ENCODE measurements at regions of chr2 and their contacts with region 1.

Region 1: GRCh38 chr2:17830053-17831034 is 14.1 kb downstream of the MSGN1 start:
- DNase-seq: no peak
- H3K4me3 ChIP-seq: peak overlapping the region; percentile 14 to 34 (median 22)
- H3K27ac ChIP-seq: no peak overlapping the region
- H3K4me1 ChIP-seq: peaks cover 7 to 12% (median 8%) of the 10 kb centered on the region in 4 donors
- H3K27me3 ChIP-seq: peaks cover 0 to 18% (median 3%) of the 10 kb centered on the region in 4 donors
- CTCF ChIP-seq: peak; percentile 37 to 83 (median 58)
- EP300 ChIP-seq: no peak
- POLR2A ChIP-seq: no peak

Region 2: GRCh38 chr2:17658251-17658843 is 172.0 kb before region 1 on chr2:
- intact Hi-C with region 1: no loop called
- DNase-seq: no peak
- H3K4me3 ChIP-seq: no peak overlapping the region
- H3K27ac ChIP-seq: no peak overlapping the region
- H3K4me1 ChIP-seq: no peaks in the 10 kb centered on the region
- H3K27me3 ChIP-seq: no peaks in the 10 kb centered on the region
- CTCF ChIP-seq: no peak
- EP300 ChIP-seq: no peak
- POLR2A ChIP-seq: no peak

Region 3: DNA sequence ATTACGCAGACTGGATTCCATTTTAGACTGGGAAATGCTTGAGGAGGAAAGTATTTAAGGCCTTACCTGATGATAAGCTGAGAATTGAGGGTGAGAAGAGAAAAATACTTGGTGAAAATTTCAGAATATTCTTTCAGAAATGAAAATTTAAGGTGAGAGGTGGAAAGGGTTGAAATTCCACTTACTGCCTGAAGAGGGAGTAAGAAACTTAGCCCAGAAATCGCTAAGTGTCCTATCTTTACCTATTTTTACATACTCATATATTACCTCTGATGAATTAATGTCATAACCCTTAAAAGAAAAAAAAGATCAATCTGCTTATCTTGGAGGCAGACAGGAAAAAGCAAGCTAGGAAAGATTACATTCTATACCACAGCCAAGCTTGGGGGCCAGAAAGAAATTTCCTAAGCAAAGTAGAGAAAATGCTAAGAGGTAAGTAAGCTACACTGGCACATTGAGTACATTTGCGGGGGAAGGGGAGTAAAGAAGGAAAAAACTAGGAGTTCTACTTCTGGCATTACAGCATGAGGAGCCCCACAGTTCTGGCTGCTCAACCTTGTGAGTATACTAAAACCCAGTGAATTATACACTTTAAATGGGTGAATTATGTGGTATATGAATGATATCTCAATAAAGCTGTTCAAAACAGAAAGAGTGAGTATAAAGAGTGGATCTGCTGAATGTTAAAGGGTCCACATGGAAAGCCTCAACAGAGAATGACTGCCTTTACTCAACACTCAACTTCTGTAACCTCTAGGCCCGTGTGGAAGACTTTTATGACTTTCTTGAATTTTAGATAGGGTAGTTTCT is 110.6 kb before region 1 on chr2:
- intact Hi-C with region 1: loop called (anchors 10 kb)
- DNase-seq: no peak
- H3K4me3 ChIP-seq: no peak overlapping the region
- H3K27ac ChIP-seq: no peak overlapping the region
- H3K4me1 ChIP-seq: no peaks in the 10 kb centered on the region
- H3K27me3 ChIP-seq: no peaks in the 10 kb centered on the region
- CTCF ChIP-seq: peak; percentile 66 to 83 (median 76)
- EP300 ChIP-seq: no peak
- POLR2A ChIP-seq: no peak

Region 4: DNA sequence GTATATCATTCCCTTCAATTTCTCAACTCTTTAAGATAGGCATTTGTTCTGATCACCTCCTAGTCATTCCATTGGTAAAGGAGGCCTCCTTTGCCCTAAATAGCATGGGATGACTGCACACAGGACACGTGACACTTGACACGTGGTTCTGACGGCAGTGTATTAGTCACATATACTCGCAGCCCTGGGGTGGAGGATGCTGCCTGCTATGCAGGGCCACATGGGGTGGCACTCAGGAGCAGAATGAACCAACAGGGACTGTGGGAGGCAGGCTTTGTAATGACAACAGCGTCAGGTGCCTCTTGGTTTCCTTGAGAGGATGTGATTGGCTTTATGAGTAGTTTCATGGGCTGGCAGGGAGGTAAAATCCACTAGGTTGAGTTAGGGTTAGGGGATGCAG is 38.8 kb after region 1 on chr2:
- intact Hi-C with region 1: no loop called
- DNase-seq: no peak
- H3K4me3 ChIP-seq: no peak overlapping the region
- H3K27ac ChIP-seq: no peak overlapping the region
- H3K4me1 ChIP-seq: peaks cover 0 to 7% (median 2%) of the 10 kb centered on the region in 4 donors
- H3K27me3 ChIP-seq: no peaks in the 10 kb centered on the region
- CTCF ChIP-seq: no peak
- EP300 ChIP-seq: no peak
- POLR2A ChIP-seq: no peak